ENCODE measurements at regions of chr12 and their contacts with region 1.

Region 1: DNA sequence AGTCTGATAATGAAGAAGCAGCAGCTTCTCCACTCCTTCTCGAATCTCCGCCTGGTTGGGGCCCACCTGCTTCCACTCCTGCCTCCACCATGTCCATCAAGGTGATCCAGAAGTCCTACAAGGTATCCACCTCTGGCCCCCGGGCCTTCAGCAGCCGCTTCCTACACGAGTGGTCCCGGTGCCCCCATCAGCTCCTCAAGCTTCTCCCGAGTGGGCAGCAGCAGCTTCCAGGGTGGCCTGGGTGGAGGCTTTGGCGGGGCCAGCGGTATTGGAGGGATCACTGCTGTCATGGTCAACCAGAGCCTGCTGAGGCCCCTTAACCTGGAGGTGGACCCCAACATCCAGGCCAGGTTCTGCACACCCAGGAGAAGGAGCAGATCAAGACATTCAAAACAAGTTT is 381.0 kb upstream of the USP15 start:
- DNase-seq: no peak
- ATAC-seq: no peak
- H3K4me3 ChIP-seq: no peak overlapping the region
- H3K27ac ChIP-seq: no peak overlapping the region
- H3K4me1 ChIP-seq: no peaks in the 10 kb centered on the region
- H3K27me3 ChIP-seq: no peaks in the 10 kb centered on the region
- CTCF ChIP-seq: no peak

Region 2: DNA sequence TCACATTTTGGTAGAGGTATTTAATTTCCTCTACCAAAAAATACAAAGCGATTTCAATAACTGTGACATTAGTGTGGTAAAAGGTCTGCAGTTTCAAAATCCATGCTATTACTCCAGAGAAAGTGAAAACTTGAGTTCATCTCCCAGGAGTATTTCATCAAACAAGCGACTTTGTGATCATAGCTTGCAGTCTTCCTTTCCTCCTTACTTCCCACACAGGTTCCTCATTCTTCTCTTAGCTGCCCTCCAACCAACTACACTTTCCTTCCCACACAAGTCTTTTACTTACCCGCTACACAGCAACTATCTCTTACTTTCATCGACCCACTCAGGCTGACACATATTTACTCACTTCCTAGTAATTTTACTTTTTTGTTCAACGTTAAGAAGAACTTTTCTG is 32.5 kb before region 1 on chr12:
- intact Hi-C with region 1: loop called in 1 of 10 experiments (anchors 2 kb)
- DNase-seq: no peak
- ATAC-seq: no peak
- H3K4me3 ChIP-seq: no peak overlapping the region
- H3K27ac ChIP-seq: no peak overlapping the region
- H3K4me1 ChIP-seq: no peaks in the 10 kb centered on the region
- H3K27me3 ChIP-seq: no peaks in the 10 kb centered on the region
- CTCF ChIP-seq: no peak